HepG2 (cell line): ENCODE measurements at regions of chr2 and their contacts with region 1.

Region 1: GRCh38 chr2:37896314-37896713 is 28.8 kb upstream of the RMDN2 start:
- DNase-seq: peak; percentile 56
- ATAC-seq: peak; percentile 89
- H3K4me3 ChIP-seq: no peak overlapping the region
- H3K27ac ChIP-seq: no peak overlapping the region
- H3K4me1 ChIP-seq: peaks cover 9% of the 10 kb centered on the region; the same call in 1 of the 2 replicates
- H3K27me3 ChIP-seq: no peaks in the 10 kb centered on the region; a peak in 2 of 5 replicates
- CTCF ChIP-seq: peak; percentile 80
- EP300 ChIP-seq: no peak
- POLR2A ChIP-seq: no peak
- RAD21 ChIP-seq: peak; percentile 62; the same call in 1 of the 2 replicates

Region 2: GRCh38 chr2:37512971-37513370 is 383.3 kb before region 1 on chr2:
- CTCF ChIA-PET with region 1: no interaction called
- POLR2A ChIA-PET with region 1: no interaction called
- in situ Hi-C with region 1: no loop called
- intact Hi-C with region 1: no loop called
- DNase-seq: no peak
- ATAC-seq: no peak
- H3K4me3 ChIP-seq: no peak overlapping the region
- H3K27ac ChIP-seq: no peak overlapping the region
- H3K4me1 ChIP-seq: no peaks in the 10 kb centered on the region
- H3K27me3 ChIP-seq: no peaks in the 10 kb centered on the region
- CTCF ChIP-seq: no peak
- EP300 ChIP-seq: no peak
- POLR2A ChIP-seq: no peak
- RAD21 ChIP-seq: no peak

Region 3: DNA sequence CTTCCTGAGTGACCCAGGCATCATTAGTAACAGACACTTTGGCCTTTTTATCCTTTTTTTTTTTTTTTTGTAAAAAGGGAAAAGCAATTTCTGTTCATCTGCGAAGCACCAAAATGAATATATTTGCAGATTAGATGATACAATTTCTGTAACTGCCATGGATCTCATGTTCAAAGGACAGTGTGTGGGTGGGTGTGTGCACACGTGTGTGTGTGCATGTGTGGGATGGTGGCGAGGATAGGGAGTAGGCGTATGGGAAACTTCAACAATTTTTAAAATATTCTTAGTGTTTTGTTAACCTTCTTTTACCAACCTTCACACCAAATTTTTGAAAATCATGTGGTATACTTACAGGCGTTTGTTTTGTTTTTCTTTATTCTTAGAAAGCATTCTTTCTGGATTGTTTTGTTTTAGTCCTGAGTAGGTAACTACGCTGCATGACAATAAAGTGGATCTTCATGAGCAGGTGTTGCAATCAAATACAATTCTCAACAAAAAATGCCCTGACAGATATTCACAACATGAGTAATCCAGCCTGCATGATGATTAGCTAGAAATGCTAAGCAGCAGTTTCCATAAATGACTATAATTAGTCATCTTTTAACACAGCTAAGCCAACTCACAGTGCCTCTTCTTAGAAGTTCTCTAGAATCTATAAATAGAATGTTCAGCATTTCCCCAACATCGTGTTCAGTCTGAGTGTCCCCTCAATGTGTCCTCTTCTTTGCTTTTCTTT is 24.7 kb before region 1 on chr2:
- CTCF ChIA-PET with region 1: no interaction called
- POLR2A ChIA-PET with region 1: no interaction called
- in situ Hi-C with region 1: no loop called
- intact Hi-C with region 1: no loop called
- DNase-seq: no peak
- ATAC-seq: no peak
- H3K4me3 ChIP-seq: no peak overlapping the region
- H3K27ac ChIP-seq: no peak overlapping the region
- H3K4me1 ChIP-seq: no peaks in the 10 kb centered on the region
- H3K27me3 ChIP-seq: peaks cover 8 to 61% of the 10 kb centered on the region in 2 experiments; a peak in 4 of 5 replicates
- CTCF ChIP-seq: no peak
- EP300 ChIP-seq: no peak
- POLR2A ChIP-seq: no peak
- RAD21 ChIP-seq: no peak

Region 4: GRCh38 chr2:37919631-37920032 is 23.3 kb after region 1 on chr2:
- CTCF ChIA-PET with region 1: interaction called, 4 read pairs
- POLR2A ChIA-PET with region 1: interaction called, 4 read pairs
- in situ Hi-C with region 1: no loop called
- intact Hi-C with region 1: loop called (anchors 2 kb)
- DNase-seq: peak; percentile 95
- ATAC-seq: peak; percentile 80
- H3K4me3 ChIP-seq: peak overlapping the region; percentile 6 to 44 (median 39); a peak in 4 of 6 replicates
- H3K27ac ChIP-seq: peak overlapping the region; percentile 91
- H3K4me1 ChIP-seq: peaks cover 94% of the 10 kb centered on the region
- H3K27me3 ChIP-seq: no peaks in the 10 kb centered on the region
- CTCF ChIP-seq: no peak
- EP300 ChIP-seq: peak in 1 of 2 experiments; percentile 82; a peak in 2 of 4 replicates
- POLR2A ChIP-seq: peak in 1 of 2 experiments; percentile 65; a peak in 2 of 4 replicates
- RAD21 ChIP-seq: no peak

Region 5: GRCh38 chr2:37925063-37925897 is 29.0 kb after region 1 on chr2 and contains the start of gene RMDN2:
- CTCF ChIA-PET with region 1: interaction called, 4 read pairs
- POLR2A ChIA-PET with region 1: interaction called, 4 read pairs
- in situ Hi-C with region 1: no loop called
- intact Hi-C with region 1: loop called (anchors 2 kb)
- DNase-seq: peak; percentile 97
- ATAC-seq: peak; percentile 97
- H3K4me3 ChIP-seq: peak within 1 kb of the TSS; percentile 78 to 97 (median 90)
- H3K27ac ChIP-seq: peak within 1 kb of the TSS; percentile 98
- H3K4me1 ChIP-seq: peaks cover 75% of the 10 kb centered on the region
- H3K27me3 ChIP-seq: no peaks in the 10 kb centered on the region
- CTCF ChIP-seq: peak; percentile 63
- EP300 ChIP-seq: peak in 1 of 2 experiments; percentile 75; a peak in 2 of 4 replicates
- POLR2A ChIP-seq: peak; percentile 97 to 98
- RAD21 ChIP-seq: peak; percentile 84; the same call in 1 of the 2 replicates
- total RNA-seq, gene RMDN2: 4.7 and 8.9 TPM in 2 replicates

Region 6: DNA sequence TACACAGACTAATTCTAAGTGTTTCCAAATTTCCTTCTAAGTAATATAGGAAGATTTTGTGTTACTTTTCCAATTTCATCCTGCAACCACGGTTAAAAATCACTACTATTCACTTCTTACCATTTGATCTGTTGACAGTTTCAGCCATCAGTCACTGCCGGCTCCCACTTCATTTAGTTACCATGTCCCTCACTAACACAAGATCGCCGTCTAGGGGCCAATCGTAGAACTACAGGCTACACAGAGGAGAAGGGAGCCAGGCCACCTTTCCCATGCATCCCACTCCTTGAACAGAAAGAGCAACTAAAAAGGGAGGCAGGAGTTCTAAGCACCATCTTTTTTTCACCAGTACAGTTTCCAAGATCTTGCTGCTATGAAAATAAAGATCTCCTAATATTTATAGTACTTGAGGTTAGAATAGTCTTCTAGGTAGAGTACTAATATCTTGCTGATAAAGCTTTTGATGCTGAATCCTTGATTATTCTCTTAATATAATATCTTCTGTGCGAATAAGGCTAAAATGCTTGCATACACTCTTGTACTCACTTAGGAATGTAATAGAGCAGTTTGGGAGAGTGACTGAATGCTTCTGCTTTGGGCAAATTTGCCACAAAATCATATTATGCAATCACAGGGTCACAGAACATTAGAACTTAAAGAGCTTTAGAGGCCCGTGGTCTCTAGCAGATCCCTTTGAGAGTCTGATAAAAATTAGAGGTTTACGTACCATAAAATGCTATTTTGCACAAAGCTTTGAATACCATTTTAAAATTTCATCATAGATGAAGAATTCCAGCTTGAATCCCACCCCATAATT is 219.1 kb after region 1 on chr2:
- CTCF ChIA-PET with region 1: interaction called, 8 read pairs
- POLR2A ChIA-PET with region 1: no interaction called
- in situ Hi-C with region 1: loop called (anchors 5 kb)
- intact Hi-C with region 1: loop called (anchors 1 kb)
- DNase-seq: peak; percentile 75
- ATAC-seq: peak; percentile 97
- H3K4me3 ChIP-seq: no peak overlapping the region
- H3K27ac ChIP-seq: no peak overlapping the region
- H3K4me1 ChIP-seq: no peaks in the 10 kb centered on the region
- H3K27me3 ChIP-seq: peaks cover 0 to 9% of the 10 kb centered on the region in 2 experiments; a peak in 2 of 5 replicates
- CTCF ChIP-seq: peak; percentile 93
- EP300 ChIP-seq: no peak
- POLR2A ChIP-seq: no peak
- RAD21 ChIP-seq: peak; percentile 79